Activated T-helper 2 cell treated with anti-CD3 and anti-CD28 coated beads, Interferon-gamma antibody, Interleukin-2, Interleukin-4, amounts not matched to agents 10 μg/mL and 5 μg/mL and 100 μg/mL, durations not matched to agents 14 hours and 24 hours and 36 hours (primary cell): ENCODE measurements at regions of chr3 and their contacts with region 1.

Region 1: DNA sequence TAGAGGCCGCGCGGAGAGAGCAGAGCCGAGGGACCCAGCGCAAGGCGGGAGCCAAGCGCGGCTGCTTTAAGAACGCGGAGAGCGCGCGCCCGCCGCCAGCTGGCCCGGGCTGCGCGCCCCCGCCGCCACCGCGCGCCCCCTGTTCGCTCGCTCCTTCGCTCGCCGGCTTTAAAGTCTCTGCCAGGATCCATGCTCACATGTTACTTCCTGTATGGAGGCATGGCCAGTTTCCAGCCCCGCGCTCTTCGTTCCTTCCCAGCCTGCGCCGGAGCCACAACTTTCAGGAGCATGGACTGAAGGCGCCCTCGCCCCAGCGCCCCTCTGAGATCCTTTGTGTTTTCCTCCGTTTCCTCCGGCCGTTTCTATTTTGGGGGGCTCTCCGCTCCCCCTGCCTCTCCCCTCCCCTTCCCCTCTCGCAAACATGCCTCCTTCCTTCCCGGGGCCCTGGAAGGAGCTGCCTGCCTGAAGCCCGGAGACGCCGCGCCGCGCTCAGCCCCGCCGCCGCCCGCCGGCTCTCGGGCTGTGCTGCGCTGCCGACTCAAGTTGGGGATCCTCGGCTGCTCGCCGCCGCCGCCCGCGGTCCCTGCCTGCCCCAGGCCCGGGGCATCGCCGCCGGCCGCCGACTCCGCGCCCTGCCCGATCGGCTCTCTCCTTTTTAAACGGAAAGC is at the start of gene PTPRG:
- DNase-seq: peak; percentile 41
- H3K4me3 Mint-ChIP-seq: peak within 1 kb of the TSS; percentile 90
- H3K27ac Mint-ChIP-seq: peak within 1 kb of the TSS; percentile 29
- H3K4me1 Mint-ChIP-seq: peaks cover 6% of the 10 kb centered on the region
- H3K27me3 Mint-ChIP-seq: peaks cover 59% of the 10 kb centered on the region
- total RNA-seq, gene PTPRG: 5.1 and 5.3 TPM in 2 replicates

Region 2: DNA sequence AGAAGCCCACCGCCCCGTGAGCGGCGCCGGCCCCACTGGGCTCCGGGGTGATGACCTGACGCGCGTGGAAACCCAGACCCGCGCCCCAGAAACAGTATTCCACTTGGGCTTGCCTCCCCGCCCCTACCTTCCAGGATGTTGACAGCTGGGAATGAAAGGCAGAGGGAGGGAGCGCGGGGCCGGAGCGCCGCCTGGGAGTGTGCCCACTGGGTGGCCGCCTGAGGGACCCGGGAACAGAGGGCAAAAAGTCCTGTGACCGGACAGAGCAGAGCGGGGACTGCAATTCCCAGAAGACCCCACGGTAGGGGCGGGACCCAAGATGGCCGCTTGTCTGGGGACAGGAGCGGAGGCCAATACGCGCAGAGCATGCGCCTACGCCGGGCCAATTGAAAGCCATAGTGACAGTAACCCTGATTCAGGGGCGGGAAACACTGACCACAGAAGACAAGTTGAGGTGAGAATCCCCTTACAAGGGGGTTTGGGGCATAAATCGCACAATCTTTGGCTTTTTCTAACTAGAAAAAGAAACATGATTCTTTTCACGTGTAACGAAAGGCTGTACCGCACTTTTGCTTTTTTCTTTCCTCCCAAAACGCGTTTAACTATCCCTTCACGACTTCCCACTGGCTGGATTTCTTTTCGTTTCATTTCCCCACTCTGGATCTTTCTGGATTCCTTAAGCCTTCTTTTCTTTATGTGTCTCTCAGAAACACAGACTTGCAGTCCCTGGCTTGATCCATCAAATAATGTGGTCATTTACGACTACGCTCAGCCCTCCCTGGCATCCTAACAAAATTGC is 310.1 kb before region 1 on chr3 and contains the start of gene FHIT:
- intact Hi-C with region 1: loop called (anchors 2 kb)
- DNase-seq: peak; percentile 89
- H3K4me3 Mint-ChIP-seq: peak within 1 kb of the TSS; percentile 91
- H3K27ac Mint-ChIP-seq: peak within 1 kb of the TSS; percentile 96
- H3K4me1 Mint-ChIP-seq: peaks cover 32% of the 10 kb centered on the region
- H3K27me3 Mint-ChIP-seq: peaks cover 11% of the 10 kb centered on the region
- total RNA-seq, gene FHIT: 20.5 and 29.9 TPM in 2 replicates

Region 3: DNA sequence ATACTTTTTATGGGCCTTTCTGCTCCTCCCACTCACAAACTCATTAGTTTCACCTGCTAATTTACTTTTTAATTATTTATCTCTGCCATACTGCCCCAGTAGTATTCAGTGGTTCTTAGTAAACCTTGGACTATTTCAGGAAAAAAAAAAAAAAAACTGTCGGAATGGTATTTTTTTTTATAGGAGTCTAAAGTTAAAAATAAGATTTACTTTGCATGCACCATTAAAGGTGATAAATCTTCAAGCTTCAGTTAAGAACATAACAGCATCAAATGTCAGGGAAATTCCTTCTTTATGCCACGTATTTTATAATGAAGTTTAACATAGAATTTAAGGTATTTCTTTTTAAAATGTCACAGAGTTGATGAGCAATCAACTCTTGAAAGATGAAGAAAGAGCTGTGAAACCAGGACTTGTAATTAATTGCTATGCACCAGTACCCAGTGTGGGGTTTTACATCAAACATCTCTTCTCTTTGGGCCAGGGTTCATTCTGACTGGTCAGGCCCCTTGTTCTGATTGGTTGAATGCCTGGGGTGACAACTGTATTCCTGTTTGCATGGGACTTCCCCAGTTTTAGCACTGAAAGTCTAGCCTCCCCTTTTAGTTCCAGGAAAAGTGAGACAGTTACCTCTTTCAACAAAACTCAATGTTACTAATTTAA is 40.4 kb before region 1 on chr3:
- intact Hi-C with region 1: loop called (anchors 2 kb)
- DNase-seq: peak; percentile 37
- H3K4me3 Mint-ChIP-seq: peak overlapping the region; percentile 42
- H3K27ac Mint-ChIP-seq: peak overlapping the region; percentile 87
- H3K4me1 Mint-ChIP-seq: peaks cover 41% of the 10 kb centered on the region
- H3K27me3 Mint-ChIP-seq: no peaks in the 10 kb centered on the region

Region 4: DNA sequence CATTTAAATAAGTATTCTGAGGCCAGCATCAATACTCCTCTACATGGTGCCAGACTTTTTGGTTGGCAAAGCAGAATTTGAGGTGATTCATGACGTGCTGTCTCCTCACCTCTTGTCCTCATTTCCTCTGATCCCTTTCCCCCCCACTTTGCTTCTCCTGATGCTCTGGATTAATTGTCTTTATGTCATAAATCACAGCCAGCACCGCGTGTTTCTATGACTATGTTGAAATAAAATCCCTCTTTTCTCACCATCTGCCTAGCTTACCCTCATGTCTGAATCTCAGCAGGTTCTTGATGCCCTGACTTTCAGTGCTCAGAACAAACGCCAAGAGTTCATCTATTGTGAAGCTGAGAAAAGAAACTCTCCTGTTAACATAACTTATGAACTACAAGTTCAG is 19.8 kb before region 1 on chr3:
- intact Hi-C with region 1: no loop called
- DNase-seq: no peak
- H3K4me3 Mint-ChIP-seq: no peak overlapping the region
- H3K27ac Mint-ChIP-seq: no peak overlapping the region
- H3K4me1 Mint-ChIP-seq: no peaks in the 10 kb centered on the region
- H3K27me3 Mint-ChIP-seq: peaks cover 11% of the 10 kb centered on the region

Region 5: GRCh38 chr3:62188681-62189383 is 627.3 kb after region 1 on chr3:
- intact Hi-C with region 1: loop called (anchors 10 kb)
- DNase-seq: peak; percentile 35
- H3K4me3 Mint-ChIP-seq: peak overlapping the region; percentile 24
- H3K27ac Mint-ChIP-seq: no peak overlapping the region
- H3K4me1 Mint-ChIP-seq: peaks cover 2% of the 10 kb centered on the region
- H3K27me3 Mint-ChIP-seq: no peaks in the 10 kb centered on the region

Region 6: DNA sequence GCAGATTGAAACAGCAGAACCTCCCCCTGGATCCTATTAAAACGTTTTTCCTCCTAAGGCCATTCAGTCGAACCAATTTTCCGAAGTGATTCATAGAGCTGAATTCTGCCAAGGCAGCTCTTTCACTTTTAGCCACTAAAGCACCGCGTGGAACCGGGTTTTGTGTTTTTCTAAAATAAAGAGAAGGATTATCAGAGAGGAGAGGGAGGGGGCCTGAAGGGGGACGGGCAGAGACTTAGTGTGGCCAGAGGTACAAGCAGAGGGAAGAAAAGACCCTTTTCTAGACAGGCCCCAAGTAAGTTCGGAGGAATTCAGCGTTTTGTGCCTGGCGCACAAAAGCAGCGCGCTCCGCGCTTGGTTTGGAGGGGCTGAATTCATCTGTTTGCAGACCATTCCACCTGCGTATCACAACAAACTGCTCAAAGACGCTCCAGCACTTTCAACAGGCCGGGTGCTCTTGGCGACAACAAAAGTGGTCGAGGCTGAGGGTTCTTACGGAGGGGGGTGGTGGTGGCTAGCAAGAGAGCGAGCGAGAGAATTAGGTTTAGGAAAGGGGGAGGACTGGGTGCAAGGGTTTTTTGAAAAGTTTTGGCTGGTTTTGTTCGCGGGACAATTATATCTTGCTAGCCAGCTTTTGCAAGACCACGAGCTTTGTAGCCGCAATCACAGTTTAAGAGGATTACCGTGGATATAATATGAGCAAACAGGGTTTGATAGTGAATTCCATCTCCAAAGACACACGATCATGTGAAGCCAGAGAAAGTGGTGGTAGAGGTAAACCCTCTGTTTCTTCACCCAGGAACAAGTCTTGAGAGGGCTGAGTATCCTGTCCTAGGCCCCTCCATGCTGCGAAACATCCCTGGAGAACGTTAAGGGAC is 813.1 kb after region 1 on chr3:
- intact Hi-C with region 1: loop called (anchors 10 kb)
- DNase-seq: no peak
- H3K4me3 Mint-ChIP-seq: no peak overlapping the region
- H3K27ac Mint-ChIP-seq: no peak overlapping the region
- H3K4me1 Mint-ChIP-seq: no peaks in the 10 kb centered on the region
- H3K27me3 Mint-ChIP-seq: peaks cover 84% of the 10 kb centered on the region